ENCODE measurements at regions of chr1 and their contacts with region 1.

Region 1: GRCh38 chr1:238469146-238469631 is 578.5 kb upstream of the ZP4 start:
- DNase-seq: peak; percentile 36
- H3K4me3 ChIP-seq: peak overlapping the region; percentile 31
- H3K27ac ChIP-seq: peak overlapping the region; percentile 40
- H3K27me3 ChIP-seq: no peaks in the 10 kb centered on the region
- CTCF ChIP-seq: no peak

Region 2: GRCh38 chr1:238653693-238654321 is 184.6 kb after region 1 on chr1:
- in situ Hi-C with region 1: loop called (anchors 25 kb)
- DNase-seq: peak; percentile 79
- H3K4me3 ChIP-seq: no peak overlapping the region
- H3K27ac ChIP-seq: peak overlapping the region; percentile 96
- H3K27me3 ChIP-seq: no peaks in the 10 kb centered on the region
- CTCF ChIP-seq: no peak

Measured in brain microvascular endothelial cell (primary cell).